GM13977 (cell line): ENCODE measurements at regions of chr3 and their contacts with region 1.

Region 1: DNA sequence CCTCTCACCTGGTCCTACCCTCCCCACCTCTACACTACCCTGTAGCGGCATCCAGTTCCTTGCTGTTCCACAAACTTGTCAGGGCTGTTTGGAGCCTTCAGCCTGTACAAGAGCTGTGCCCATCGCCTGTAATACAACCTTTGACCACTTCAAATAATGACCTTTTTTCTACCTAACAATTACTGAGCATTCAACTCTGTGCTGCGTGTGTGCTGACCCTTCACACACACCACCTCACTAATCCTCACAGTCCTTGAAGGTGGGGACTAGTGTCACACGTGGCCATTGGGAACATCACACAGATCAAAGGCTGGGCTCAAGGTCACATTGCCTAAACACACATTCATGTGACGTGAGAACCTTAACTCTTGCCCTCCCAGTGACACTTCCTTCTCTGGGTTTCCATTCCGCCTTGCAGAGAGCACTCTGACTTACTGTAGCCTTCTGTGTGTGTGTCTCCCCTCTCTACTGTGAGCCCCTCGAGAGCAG is 3.1 kb downstream of the C3orf20 start:
- DNase-seq: no peak
- CTCF ChIP-seq: no peak

Region 2: GRCh38 chr3:14780927-14781507 is 103.0 kb after region 1 on chr3:
- in situ Hi-C with region 1: loop called (anchors 10 kb)
- DNase-seq: peak; percentile 79
- CTCF ChIP-seq: peak; percentile 92